CD4-positive, alpha-beta memory T cell (primary cell): ENCODE measurements at regions of chr11 and their contacts with region 1.

Region 1: DNA sequence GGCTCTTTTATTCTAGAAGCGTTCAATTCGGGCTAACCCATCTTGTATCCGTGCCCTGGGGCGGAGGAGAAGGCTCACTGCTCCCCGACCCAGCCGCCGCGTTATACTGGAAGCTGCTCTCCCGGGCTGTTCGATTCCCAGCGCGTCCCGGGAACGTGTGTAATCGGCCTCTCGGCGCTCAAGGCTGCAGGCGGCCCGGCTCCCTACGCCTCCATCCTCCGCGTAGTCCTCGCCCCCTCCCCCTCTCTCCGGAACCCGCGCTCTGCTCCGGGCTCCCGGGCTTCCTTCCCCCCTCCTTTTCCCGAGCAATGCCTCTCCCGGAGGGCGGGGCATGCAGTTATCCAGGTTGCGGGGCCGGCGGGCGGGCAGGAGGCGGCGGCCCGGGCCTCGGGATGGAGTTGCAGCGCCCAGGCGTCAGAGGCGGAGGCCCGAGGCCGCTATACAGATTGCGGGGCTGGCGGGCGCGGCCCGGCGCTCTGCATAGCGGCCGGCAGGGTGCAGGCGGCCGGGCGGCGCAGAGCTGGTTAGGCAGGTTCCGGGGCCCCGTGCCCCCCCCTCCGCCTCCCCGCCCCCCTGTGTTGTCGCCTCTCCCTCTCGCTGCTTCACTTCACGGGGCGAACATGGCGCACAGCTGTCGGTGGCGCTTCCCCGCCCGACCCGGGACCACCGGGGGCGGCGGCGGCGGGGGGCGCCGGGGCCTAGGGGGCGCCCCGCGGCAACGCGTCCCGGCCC is at the start of gene KMT2A:
- DNase-seq: peak; percentile 89 to 99 (median 95)
- H3K4me3 ChIP-seq: peak within 1 kb of the TSS; percentile 90 to 92
- H3K4me3 Mint-ChIP-seq: peak within 1 kb of the TSS; percentile 88 to 99 (median 94)
- H3K27ac ChIP-seq: peak within 1 kb of the TSS; percentile 92
- H3K27ac Mint-ChIP-seq: peak within 1 kb of the TSS; percentile 94 to 99 (median 97)
- H3K4me1 ChIP-seq: peaks cover 31% of the 10 kb centered on the region
- H3K4me1 Mint-ChIP-seq: peaks cover 26 to 65% (median 32%) of the 10 kb centered on the region in 4 donors
- H3K27me3 ChIP-seq: no peaks in the 10 kb centered on the region
- H3K27me3 Mint-ChIP-seq: peaks cover 1 to 7% of the 10 kb centered on the region in 2 donors
- total RNA-seq, gene KMT2A: 185 to 202 TPM

Region 2: GRCh38 chr11:118359295-118359958 is 76.6 kb before region 1 on chr11 and contains the start of gene UBE4A:
- CTCF ChIA-PET with region 1: no interaction called
- POLR2A ChIA-PET with region 1: interaction called, 20 read pairs
- intact Hi-C with region 1: loop called (anchors 1 kb)
- DNase-seq: peak; percentile 94 to 95 (median 95)
- H3K4me3 ChIP-seq: peak within 1 kb of the TSS; percentile 82 to 83
- H3K4me3 Mint-ChIP-seq: peak within 1 kb of the TSS; percentile 93 to 100 (median 98)
- H3K27ac ChIP-seq: peak within 1 kb of the TSS; percentile 91
- H3K27ac Mint-ChIP-seq: peak within 1 kb of the TSS; percentile 95 to 100 (median 98)
- H3K4me1 ChIP-seq: peaks cover 44% of the 10 kb centered on the region
- H3K4me1 Mint-ChIP-seq: peaks cover 28 to 54% (median 45%) of the 10 kb centered on the region in 4 donors
- H3K27me3 ChIP-seq: no peaks in the 10 kb centered on the region
- H3K27me3 Mint-ChIP-seq: no peaks in the 10 kb centered on the region
- total RNA-seq, gene UBE4A: 50.3 to 52.2 TPM

Region 3: GRCh38 chr11:118406599-118407166 is 29.4 kb before region 1 on chr11:
- CTCF ChIA-PET with region 1: interaction called, 9 read pairs
- POLR2A ChIA-PET with region 1: interaction called, 163 read pairs
- intact Hi-C with region 1: loop called (anchors 1 kb)
- DNase-seq: no peak
- H3K4me3 ChIP-seq: no peak overlapping the region
- H3K4me3 Mint-ChIP-seq: no peak overlapping the region
- H3K27ac ChIP-seq: no peak overlapping the region
- H3K27ac Mint-ChIP-seq: peak overlapping the region in 5 of 7 donors; percentile 36 to 59 (median 54)
- H3K4me1 ChIP-seq: peaks cover 36% of the 10 kb centered on the region
- H3K4me1 Mint-ChIP-seq: peaks cover 31 to 56% (median 42%) of the 10 kb centered on the region in 4 donors
- H3K27me3 ChIP-seq: no peaks in the 10 kb centered on the region
- H3K27me3 Mint-ChIP-seq: no peaks in the 10 kb centered on the region

Region 4: GRCh38 chr11:118448294-118448693 is 12.2 kb after region 1 on chr11:
- CTCF ChIA-PET with region 1: interaction called, 4 read pairs
- POLR2A ChIA-PET with region 1: interaction called, 25 read pairs
- intact Hi-C with region 1: loop called (anchors 1 kb)
- DNase-seq: no peak
- H3K4me3 ChIP-seq: no peak overlapping the region
- H3K4me3 Mint-ChIP-seq: peak overlapping the region in 2 of 8 donors; percentile 7 to 44
- H3K27ac ChIP-seq: no peak overlapping the region
- H3K27ac Mint-ChIP-seq: peak overlapping the region in 2 of 7 donors; percentile 49 to 59
- H3K4me1 ChIP-seq: peaks cover 70% of the 10 kb centered on the region
- H3K4me1 Mint-ChIP-seq: peaks cover 54 to 83% (median 72%) of the 10 kb centered on the region in 4 donors
- H3K27me3 ChIP-seq: no peaks in the 10 kb centered on the region
- H3K27me3 Mint-ChIP-seq: no peaks in the 10 kb centered on the region

Region 5: GRCh38 chr11:118572061-118572980 is 136.3 kb after region 1 on chr11 and contains the start of gene ARCN1:
- CTCF ChIA-PET with region 1: no interaction called
- POLR2A ChIA-PET with region 1: interaction called, 12 read pairs
- intact Hi-C with region 1: loop called (anchors 5 kb)
- DNase-seq: peak; percentile 79 to 87 (median 81)
- H3K4me3 ChIP-seq: peak within 1 kb of the TSS; percentile 79 to 93
- H3K4me3 Mint-ChIP-seq: peak within 1 kb of the TSS; percentile 92 to 99 (median 98)
- H3K27ac ChIP-seq: peak within 1 kb of the TSS; percentile 100
- H3K27ac Mint-ChIP-seq: peak within 1 kb of the TSS; percentile 94 to 99 (median 98)
- H3K4me1 ChIP-seq: peaks cover 50% of the 10 kb centered on the region
- H3K4me1 Mint-ChIP-seq: peaks cover 32 to 54% (median 44%) of the 10 kb centered on the region in 4 donors
- H3K27me3 ChIP-seq: no peaks in the 10 kb centered on the region
- H3K27me3 Mint-ChIP-seq: no peaks in the 10 kb centered on the region
- total RNA-seq, gene ARCN1: 133 to 134 TPM